Left colon (tissue), 2 donors: ENCODE measurements at regions of chr4 and their contacts with region 1.

Region 1: GRCh38 chr4:5142726-5143125 is 91.4 kb downstream of the STK32B start:
- DNase-seq: peak in 1 of 2 donors; percentile 9
- ATAC-seq: no peak

Region 2: GRCh38 chr4:4995103-4995907 is 147.4 kb before region 1 on chr4:
- intact Hi-C with region 1: loop called in 1 of 2 experiments (anchors 10 kb)
- DNase-seq: peak; percentile 53 to 65
- ATAC-seq: peak; percentile 63

Region 3: GRCh38 chr4:5079581-5079980 is 63.1 kb before region 1 on chr4:
- intact Hi-C with region 1: no loop called
- DNase-seq: no peak
- ATAC-seq: no peak